WTC11 (cell line): ENCODE measurements at regions of chr1 and their contacts with region 1.

Region 1: GRCh38 chr1:70221241-70222121 is at the start of gene SRSF11:
- DNase-seq: peak; percentile 96
- ATAC-seq: peak; percentile 93
- H3K4me3 Mint-ChIP-seq: peak within 1 kb of the TSS; percentile 88
- H3K27ac Mint-ChIP-seq: peak within 1 kb of the TSS; percentile 87
- H3K4me1 Mint-ChIP-seq: peaks cover 33% of the 10 kb centered on the region
- H3K27me3 Mint-ChIP-seq: no peaks in the 10 kb centered on the region
- CTCF ChIP-seq: no peak
- total RNA-seq, gene SRSF11: 170 to 193 TPM (median 171 TPM) in 3 replicates

Region 2: GRCh38 chr1:70205434-70206118 is 15.9 kb before region 1 on chr1 and contains the start of gene LRRC40:
- CTCF ChIA-PET with region 1: interaction called, 3 read pairs
- POLR2A ChIA-PET with region 1: interaction called, 19 read pairs
- DNase-seq: peak; percentile 97
- ATAC-seq: peak; percentile 97
- H3K4me3 Mint-ChIP-seq: peak within 1 kb of the TSS; percentile 100
- H3K27ac Mint-ChIP-seq: peak within 1 kb of the TSS; percentile 100
- H3K4me1 Mint-ChIP-seq: peaks cover 14% of the 10 kb centered on the region
- H3K27me3 Mint-ChIP-seq: no peaks in the 10 kb centered on the region
- CTCF ChIP-seq: no peak
- total RNA-seq, gene LRRC40: 26.7 to 31.5 TPM (median 31.0 TPM) in 3 replicates

Region 3: DNA sequence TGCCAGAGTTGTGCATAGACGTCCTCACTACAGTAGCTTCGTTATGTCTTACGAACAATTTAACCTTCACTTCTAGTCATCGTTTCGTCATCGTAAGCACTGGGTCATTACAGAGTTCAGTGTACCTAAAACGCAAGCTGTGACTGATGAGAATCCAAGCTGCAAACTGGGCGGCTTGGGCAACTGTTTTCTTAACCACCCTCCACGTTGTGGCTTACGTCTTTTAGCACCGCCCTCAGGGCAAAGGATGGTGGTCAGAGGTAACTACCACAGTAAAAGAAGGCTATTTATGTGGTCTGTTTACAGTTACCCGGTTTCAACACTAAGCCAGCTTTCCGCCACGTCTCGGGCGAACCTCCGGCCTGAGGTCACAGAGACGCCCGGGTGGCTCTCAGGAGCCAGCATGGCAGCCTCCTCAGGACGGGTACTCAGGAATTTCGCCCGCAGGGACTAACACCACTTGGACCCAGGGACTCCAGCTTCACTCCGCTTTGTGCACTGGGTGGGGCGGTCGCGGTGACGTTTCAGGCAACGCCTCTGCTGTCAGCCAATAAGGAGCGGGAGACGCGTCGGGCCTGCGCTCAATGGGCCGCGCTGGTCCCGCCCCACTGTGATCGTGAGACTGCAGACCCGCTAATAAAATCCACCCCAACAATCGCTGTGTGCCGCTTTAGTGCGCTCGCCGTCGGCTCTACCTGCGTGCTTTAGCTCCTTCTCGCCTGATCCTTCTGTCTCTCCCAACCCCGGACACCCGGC is 189.3 kb after region 1 on chr1 and contains the start of gene CTH:
- CTCF ChIA-PET with region 1: no interaction called
- POLR2A ChIA-PET with region 1: interaction called, 20 read pairs
- DNase-seq: peak; percentile 99
- ATAC-seq: peak; percentile 98
- H3K4me3 Mint-ChIP-seq: peak within 1 kb of the TSS; percentile 99
- H3K27ac Mint-ChIP-seq: peak within 1 kb of the TSS; percentile 100
- H3K4me1 Mint-ChIP-seq: peaks cover 14% of the 10 kb centered on the region
- H3K27me3 Mint-ChIP-seq: no peaks in the 10 kb centered on the region
- CTCF ChIP-seq: no peak
- total RNA-seq, gene CTH: 20.8 to 27.8 TPM (median 23.9 TPM) in 3 replicates